ENCODE measurements at regions of chr4 and their contacts with region 1.

Region 1: GRCh38 chr4:84740057-84740456 is 157.1 kb downstream of the CDS1 start:
- DNase-seq: peak in 4 of 5 donors; percentile 54 to 91 (median 82)
- H3K4me3 ChIP-seq: no peak overlapping the region
- H3K27ac ChIP-seq: no peak overlapping the region
- H3K4me1 ChIP-seq: no peaks in the 10 kb centered on the region
- H3K27me3 ChIP-seq: no peaks in the 10 kb centered on the region
- CTCF ChIP-seq: no peak

Region 2: GRCh38 chr4:83785891-83786290 is 954.2 kb before region 1 on chr4:
- intact Hi-C with region 1: no loop called
- DNase-seq: no peak
- H3K4me3 ChIP-seq: no peak overlapping the region
- H3K27ac ChIP-seq: no peak overlapping the region
- H3K4me1 ChIP-seq: no peaks in the 10 kb centered on the region
- H3K27me3 ChIP-seq: no peaks in the 10 kb centered on the region
- CTCF ChIP-seq: no peak

Region 3: DNA sequence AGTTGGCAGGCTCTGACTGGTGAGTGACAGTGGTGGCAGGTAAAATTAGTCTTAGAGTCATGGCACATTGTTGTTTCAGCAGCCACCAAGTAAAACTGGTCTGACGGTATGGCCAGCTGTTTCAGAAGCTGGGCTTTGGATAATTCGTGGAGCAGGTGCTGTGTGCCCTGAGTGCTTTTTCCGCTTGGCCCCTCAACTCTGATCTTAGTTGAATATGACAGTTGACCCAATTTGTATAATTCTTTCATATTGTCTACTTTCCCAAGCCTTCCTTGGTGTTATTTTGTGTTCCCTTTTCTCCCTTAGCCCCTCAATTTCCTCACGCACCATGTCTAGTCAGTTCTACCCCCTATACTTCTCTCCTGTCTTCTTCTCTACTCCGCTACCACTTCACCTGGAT is 125.2 kb before region 1 on chr4:
- intact Hi-C with region 1: no loop called
- DNase-seq: no peak
- H3K4me3 ChIP-seq: no peak overlapping the region
- H3K27ac ChIP-seq: no peak overlapping the region
- H3K4me1 ChIP-seq: no peaks in the 10 kb centered on the region
- H3K27me3 ChIP-seq: no peaks in the 10 kb centered on the region
- CTCF ChIP-seq: no peak

Region 4: DNA sequence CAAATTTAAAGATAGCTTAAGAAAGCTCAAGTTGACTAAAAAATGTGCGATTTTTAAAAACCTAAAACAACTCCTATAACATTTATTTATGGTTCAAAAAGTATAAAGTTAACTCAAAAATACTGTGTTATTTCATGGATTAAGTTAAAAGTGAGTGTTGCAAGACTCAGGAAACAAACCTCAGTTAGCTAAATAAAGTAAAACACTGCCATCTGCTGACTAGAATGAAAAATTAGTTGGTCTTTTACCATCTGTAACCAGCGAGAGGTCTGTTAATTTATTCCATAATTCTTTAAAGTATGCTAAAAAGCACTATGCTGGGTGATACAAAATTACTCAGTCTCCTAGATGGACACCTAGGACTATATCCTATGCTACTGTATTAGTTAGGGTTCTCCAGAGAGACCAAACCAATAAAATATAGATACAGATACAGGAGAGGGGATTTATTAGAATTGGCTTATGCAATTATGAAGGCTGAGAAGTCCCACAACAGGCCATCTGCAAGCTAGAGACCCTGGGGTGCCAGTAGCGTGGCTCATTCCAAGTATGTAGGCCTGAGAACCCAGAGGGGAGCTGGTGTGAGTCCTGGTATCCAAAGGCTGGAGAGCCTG is 231.4 kb after region 1 on chr4:
- intact Hi-C with region 1: loop called (anchors 10 kb)
- DNase-seq: peak in 2 of 5 donors; percentile 56 to 71
- H3K4me3 ChIP-seq: no peak overlapping the region
- H3K27ac ChIP-seq: no peak overlapping the region
- H3K4me1 ChIP-seq: no peaks in the 10 kb centered on the region
- H3K27me3 ChIP-seq: no peaks in the 10 kb centered on the region
- CTCF ChIP-seq: peak; percentile 51

Measured in kidney (tissue), 22 donors.